ENCODE measurements at regions of chr4 and their contacts with region 1.

Region 1: GRCh38 chr4:77777135-77777807 is 41.9 kb downstream of the CNOT6L start:
- DNase-seq: no peak
- H3K4me3 Mint-ChIP-seq: no peak overlapping the region
- H3K27ac Mint-ChIP-seq: no peak overlapping the region
- H3K4me1 Mint-ChIP-seq: peaks cover 36% of the 10 kb centered on the region
- H3K27me3 Mint-ChIP-seq: no peaks in the 10 kb centered on the region

Region 2: DNA sequence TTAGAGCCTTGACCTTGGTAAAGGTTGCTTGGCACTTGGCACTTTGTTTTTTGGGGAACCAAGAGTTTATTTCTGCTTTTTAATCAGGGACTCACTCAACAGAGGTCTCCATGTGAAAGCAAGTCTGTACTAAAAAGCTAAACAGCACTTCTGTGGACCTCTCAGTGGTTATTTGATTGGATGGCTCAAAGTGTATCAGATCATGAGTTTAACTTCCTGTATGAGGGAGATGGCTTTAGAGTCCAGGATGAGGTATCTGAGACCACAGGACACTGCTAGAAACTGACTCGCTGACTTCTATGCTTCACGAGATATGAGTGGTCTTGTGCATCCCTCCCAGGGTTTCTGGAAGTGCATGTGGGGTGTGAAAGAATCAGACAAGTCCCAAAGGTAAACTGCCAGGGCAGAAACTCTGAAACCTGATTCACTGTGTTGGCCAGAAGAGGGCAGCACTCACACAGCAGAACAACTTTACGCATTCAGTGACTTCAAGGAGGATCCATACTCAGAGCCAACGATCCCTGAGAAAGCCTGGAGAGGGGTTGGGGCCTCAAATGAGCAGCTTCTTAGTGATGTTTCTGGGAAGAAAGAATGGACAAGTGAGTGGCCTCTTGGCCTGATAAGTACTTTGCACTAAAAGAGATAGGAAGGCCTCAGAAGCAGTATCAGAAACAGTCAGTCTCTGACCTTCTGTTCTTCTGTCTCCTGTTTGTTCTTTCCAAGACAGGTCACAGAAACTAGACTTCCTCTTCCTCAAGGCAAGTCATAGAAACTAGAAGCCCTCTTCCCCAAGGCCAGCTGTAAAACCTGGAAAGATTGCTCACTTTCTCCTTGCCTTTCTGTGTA is 391.9 kb before region 1 on chr4:
- intact Hi-C with region 1: no loop called
- DNase-seq: peak; percentile 32
- H3K4me3 Mint-ChIP-seq: no peak overlapping the region
- H3K27ac Mint-ChIP-seq: no peak overlapping the region
- H3K4me1 Mint-ChIP-seq: peaks cover 6% of the 10 kb centered on the region
- H3K27me3 Mint-ChIP-seq: peaks cover 8% of the 10 kb centered on the region

Region 3: GRCh38 chr4:77765720-77766119 is 11.6 kb before region 1 on chr4:
- intact Hi-C with region 1: loop called (anchors 2 kb)
- DNase-seq: no peak
- H3K4me3 Mint-ChIP-seq: no peak overlapping the region
- H3K27ac Mint-ChIP-seq: no peak overlapping the region
- H3K4me1 Mint-ChIP-seq: no peaks in the 10 kb centered on the region
- H3K27me3 Mint-ChIP-seq: no peaks in the 10 kb centered on the region

Region 4: DNA sequence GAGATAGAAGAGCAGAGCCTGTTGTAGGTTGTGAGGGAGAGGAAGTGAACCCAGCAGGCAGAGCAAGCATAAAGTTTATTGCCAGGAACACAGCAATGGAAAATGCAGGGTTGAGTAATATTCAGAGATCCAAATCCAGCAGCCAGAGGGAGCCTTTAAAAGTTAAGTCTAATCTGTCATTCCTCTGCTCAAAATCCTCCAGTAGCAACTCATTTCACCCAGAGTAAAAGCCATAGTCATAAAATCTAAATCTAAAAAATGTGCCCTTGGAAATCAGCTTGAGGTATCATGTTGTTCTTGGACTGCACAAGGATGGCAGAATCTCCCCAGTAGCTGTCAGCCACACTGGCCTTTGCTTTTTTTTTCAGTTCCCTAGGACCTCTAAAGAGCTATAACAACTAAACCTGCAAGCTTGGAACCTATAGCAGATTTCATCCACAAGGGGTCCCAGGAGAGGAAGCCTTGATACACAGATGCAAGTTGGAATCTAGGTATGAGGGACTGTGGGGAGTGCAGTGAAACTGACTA is 217.0 kb after region 1 on chr4:
- intact Hi-C with region 1: no loop called
- DNase-seq: no peak
- H3K4me3 Mint-ChIP-seq: no peak overlapping the region
- H3K27ac Mint-ChIP-seq: no peak overlapping the region
- H3K4me1 Mint-ChIP-seq: no peaks in the 10 kb centered on the region
- H3K27me3 Mint-ChIP-seq: peaks cover 6% of the 10 kb centered on the region

Region 5: GRCh38 chr4:78661921-78662521 is 884.8 kb after region 1 on chr4:
- intact Hi-C with region 1: no loop called
- DNase-seq: no peak
- H3K4me3 Mint-ChIP-seq: no peak overlapping the region
- H3K27ac Mint-ChIP-seq: no peak overlapping the region
- H3K4me1 Mint-ChIP-seq: peaks cover 77% of the 10 kb centered on the region
- H3K27me3 Mint-ChIP-seq: no peaks in the 10 kb centered on the region

Measured in activated T-helper 1 cell treated with anti-CD3 and anti-CD28 coated beads, Interleukin-12 subunit alpha, Interleukin-12 subunit beta, Interleukin-2, Interleukin-4 antibody, amounts not matched to agents 30 ng/mL and 10 ng/mL and 1 ng/mL, durations not matched to agents 14 hours and 24 hours and 36 hours (primary cell).